Left lung (tissue), 14 donors: ENCODE measurements at regions of chr2 and their contacts with region 1.

Region 1: GRCh38 chr2:19863303-19864041 is 38.3 kb downstream of the TTC32 start:
- DNase-seq: peak; percentile 59 to 95 (median 70)
- ATAC-seq: peak; percentile 95
- H3K4me3 ChIP-seq: no peak overlapping the region
- H3K27ac ChIP-seq: no peak overlapping the region
- H3K4me1 ChIP-seq: peaks cover 2 to 11% of the 10 kb centered on the region in 2 donors
- H3K27me3 ChIP-seq: peaks cover 0 to 17% of the 10 kb centered on the region in 2 donors
- CTCF ChIP-seq: peak; percentile 95 to 96

Region 2: GRCh38 chr2:18520451-18521425 is 1342.7 kb before region 1 on chr2:
- intact Hi-C with region 1: loop called in 1 of 2 experiments (anchors 10 kb)
- DNase-seq: peak; percentile 66 to 92 (median 86)
- ATAC-seq: peak; percentile 93
- H3K4me3 ChIP-seq: no peak overlapping the region
- H3K27ac ChIP-seq: no peak overlapping the region
- H3K4me1 ChIP-seq: peaks cover 5% of the 10 kb centered on the region in 2 donors
- H3K27me3 ChIP-seq: no peaks in the 10 kb centered on the region
- CTCF ChIP-seq: peak; percentile 78 to 83

Region 3: GRCh38 chr2:19632403-19632991 is 231.0 kb before region 1 on chr2:
- intact Hi-C with region 1: no loop called
- DNase-seq: peak in 2 of 4 donors; percentile 74 to 77
- ATAC-seq: no peak
- H3K4me3 ChIP-seq: no peak overlapping the region
- H3K27ac ChIP-seq: no peak overlapping the region
- H3K4me1 ChIP-seq: no peaks in the 10 kb centered on the region
- H3K27me3 ChIP-seq: no peaks in the 10 kb centered on the region
- CTCF ChIP-seq: no peak